Dendritic cell treated with granulocyte-macrophage colony-stimulating factor and Interleukin-4, amounts not matched to agents 40 ng/mL and 50 ng/mL, for 4 days (primary cell): ENCODE measurements at regions of chr10 and their contacts with region 1.

Region 1: DNA sequence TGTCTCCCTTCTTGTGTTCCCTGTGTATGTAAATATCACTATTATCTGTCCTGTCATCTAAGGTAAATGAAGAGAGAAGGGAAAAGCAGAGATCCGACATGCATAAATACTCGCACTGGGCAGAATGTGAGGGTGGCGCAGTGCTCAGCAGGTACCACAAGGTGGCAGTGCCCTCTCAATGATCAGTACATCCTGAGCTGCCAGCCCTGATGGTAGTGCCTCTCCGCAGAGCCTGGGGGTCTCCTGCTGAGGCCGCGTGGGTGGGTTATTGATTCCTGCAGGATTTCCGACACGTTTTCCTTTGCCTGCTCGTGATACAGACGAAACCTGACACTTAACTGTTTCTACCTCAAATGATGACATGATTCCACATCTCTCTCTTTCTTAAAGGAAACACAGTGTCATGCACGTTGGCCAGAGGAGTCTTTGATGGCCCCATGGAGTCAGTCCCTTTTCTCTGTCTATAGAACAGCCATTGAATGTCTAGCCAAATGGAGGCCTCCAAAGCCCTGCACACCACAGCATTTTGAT is 19.8 kb downstream of the RGR start:
- H3K4me3 Mint-ChIP-seq: no peak overlapping the region
- H3K27ac Mint-ChIP-seq: no peak overlapping the region
- H3K4me1 Mint-ChIP-seq: peaks cover 10% of the 10 kb centered on the region
- H3K27me3 Mint-ChIP-seq: peaks cover 17% of the 10 kb centered on the region

Region 2: DNA sequence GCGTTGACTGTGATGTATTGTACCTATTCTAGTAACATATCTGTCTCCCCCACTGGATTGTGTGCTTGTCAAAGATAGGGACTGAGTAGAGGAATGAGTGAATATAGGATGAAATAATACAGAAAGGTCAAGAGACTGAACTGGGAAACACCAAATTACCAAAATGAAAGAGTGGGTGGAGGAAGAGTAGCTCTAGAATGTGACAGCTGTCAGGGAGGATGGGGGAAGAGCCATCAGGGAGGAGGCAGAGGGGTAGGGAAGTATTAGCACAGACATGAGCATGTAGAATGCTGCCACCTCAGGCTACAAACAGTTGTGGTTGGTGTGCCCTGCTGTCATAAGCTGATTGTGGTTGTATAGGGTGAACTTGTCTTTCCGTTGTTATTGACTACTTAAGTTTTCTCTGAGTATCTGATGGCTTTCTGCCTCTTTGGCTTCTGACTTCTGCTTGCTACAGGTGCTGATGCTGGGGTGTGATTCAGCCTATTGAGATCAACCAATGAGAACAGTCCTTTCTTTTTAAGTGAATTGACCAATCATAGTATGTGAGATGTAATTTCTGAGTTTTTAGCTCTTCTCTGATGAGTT is 69.3 kb after region 1 on chr10:
- intact Hi-C with region 1: loop called (anchors 5 kb)
- H3K4me3 Mint-ChIP-seq: no peak overlapping the region
- H3K27ac Mint-ChIP-seq: no peak overlapping the region
- H3K4me1 Mint-ChIP-seq: peaks cover 39% of the 10 kb centered on the region
- H3K27me3 Mint-ChIP-seq: no peaks in the 10 kb centered on the region

Region 3: DNA sequence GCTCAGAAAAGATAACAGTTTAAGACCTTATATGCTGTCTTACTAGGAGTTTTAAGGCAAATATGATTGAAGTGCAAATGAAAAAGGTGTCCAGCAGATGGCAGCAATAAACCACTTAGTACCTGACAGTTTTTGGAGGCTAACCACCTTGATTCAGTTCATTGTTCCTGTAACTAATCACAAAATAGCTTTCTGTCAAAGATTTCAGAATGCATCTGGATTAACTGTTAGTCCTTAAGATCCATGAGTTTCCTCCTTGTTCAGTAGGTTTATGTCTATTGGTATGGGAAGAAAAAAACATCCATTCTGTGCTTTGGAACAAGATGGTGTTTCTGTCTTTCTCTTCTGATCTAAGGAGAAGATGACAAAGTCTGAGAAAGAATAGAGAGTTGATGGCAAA is 110.3 kb after region 1 on chr10:
- intact Hi-C with region 1: loop called (anchors 5 kb)
- H3K4me3 Mint-ChIP-seq: no peak overlapping the region
- H3K27ac Mint-ChIP-seq: no peak overlapping the region
- H3K4me1 Mint-ChIP-seq: peaks cover 6% of the 10 kb centered on the region
- H3K27me3 Mint-ChIP-seq: no peaks in the 10 kb centered on the region

Region 4: DNA sequence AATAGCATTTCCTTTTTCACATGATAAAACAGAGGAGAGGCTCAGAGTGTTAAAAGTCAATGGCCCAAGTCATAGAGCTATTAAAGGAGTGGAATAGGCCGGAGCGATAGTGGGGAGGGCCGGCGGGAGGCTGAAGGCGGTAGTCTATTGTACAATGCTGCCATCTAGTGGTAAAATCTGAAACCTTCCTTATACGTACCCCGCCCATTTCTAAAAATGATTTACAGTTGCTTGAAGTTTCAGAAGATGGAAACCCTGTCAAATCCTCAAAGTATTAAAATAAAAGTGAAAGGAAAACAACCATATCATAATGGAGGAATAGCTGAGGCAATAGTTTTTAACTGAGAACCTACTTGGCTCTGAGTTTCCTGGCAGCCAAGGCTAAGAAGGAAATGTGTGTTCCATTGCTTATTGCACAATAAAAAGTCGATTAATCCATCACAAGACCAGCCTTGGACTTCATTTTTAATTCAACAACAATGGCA is 272.8 kb after region 1 on chr10:
- intact Hi-C with region 1: loop called (anchors 1 kb)
- H3K4me3 Mint-ChIP-seq: no peak overlapping the region
- H3K27ac Mint-ChIP-seq: no peak overlapping the region
- H3K4me1 Mint-ChIP-seq: peaks cover 15% of the 10 kb centered on the region
- H3K27me3 Mint-ChIP-seq: peaks cover 31% of the 10 kb centered on the region

Region 5: GRCh38 chr10:84574102-84574501 is 309.4 kb after region 1 on chr10:
- intact Hi-C with region 1: no loop called
- H3K4me3 Mint-ChIP-seq: no peak overlapping the region
- H3K27ac Mint-ChIP-seq: no peak overlapping the region
- H3K4me1 Mint-ChIP-seq: no peaks in the 10 kb centered on the region
- H3K27me3 Mint-ChIP-seq: peaks cover 2% of the 10 kb centered on the region